WTC11 (cell line): ENCODE measurements at regions of chr14 and their contacts with region 1.

Region 1: GRCh38 chr14:20855652-20856291 is 35.4 kb upstream of the RNASE3 start:
- DNase-seq: peak; percentile 66
- ATAC-seq: peak; percentile 90
- H3K4me3 Mint-ChIP-seq: no peak overlapping the region
- H3K27ac Mint-ChIP-seq: no peak overlapping the region
- H3K4me1 Mint-ChIP-seq: peaks cover 12% of the 10 kb centered on the region
- H3K27me3 Mint-ChIP-seq: peaks cover 2% of the 10 kb centered on the region; the same call in 1 of the 2 replicates
- CTCF ChIP-seq: no peak

Region 2: DNA sequence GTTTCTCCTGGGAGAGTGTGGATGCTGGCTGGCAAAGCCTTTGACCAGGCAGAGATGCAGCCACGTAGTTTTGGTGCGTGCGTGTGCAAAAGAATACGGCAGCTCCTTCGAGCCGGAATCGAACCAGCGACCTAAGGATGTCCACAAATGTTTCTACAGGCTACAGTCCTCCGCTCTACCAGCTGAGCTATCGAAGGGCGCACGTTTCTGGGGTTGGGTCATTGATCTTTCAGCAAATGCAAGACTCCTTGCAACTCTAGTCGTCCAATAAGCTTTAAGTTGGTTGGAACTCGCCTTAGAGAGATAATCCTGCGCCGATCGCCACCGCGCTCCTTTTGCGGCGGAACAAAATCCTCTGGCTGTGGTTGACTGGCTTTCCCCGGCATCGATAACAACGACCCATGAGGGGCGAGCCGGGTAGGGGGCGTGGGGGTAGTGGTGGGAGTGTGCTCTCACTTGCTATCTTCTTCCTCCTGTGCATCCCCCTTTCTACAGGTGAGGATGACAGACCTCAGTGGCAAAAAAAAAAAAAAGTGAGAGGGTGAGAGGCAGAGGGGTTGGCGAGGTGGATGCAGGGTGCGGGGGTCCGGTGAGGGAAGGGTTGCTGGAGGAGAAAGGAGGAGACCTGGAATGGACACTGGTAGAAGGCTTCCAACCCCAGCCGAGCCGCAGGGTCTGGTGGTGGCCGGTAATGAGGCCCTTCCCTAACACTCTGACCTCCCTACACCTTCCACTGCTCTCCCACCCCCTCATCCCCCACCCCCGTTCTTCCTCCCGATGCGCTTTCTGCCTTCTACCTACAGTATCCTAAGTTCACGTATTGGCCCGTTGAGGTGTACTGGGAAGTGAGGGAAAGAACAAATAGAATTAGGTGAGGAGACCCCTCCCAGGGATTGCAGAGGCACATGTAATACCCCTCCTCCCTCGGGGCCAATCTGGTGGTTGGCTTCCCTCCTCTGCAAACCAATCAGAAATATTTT is 202.5 kb before region 1 on chr14:
- CTCF ChIA-PET with region 1: interaction called, 14 read pairs
- POLR2A ChIA-PET with region 1: no interaction called
- DNase-seq: peak; percentile 91
- ATAC-seq: peak; percentile 52
- H3K4me3 Mint-ChIP-seq: peak overlapping the region; percentile 94
- H3K27ac Mint-ChIP-seq: peak overlapping the region; percentile 50; the same call in 1 of the 2 replicates
- H3K4me1 Mint-ChIP-seq: peaks cover 33% of the 10 kb centered on the region
- H3K27me3 Mint-ChIP-seq: peaks cover 38% of the 10 kb centered on the region
- CTCF ChIP-seq: no peak

Region 3: GRCh38 chr14:20697273-20698017 is 158.3 kb before region 1 on chr14:
- CTCF ChIA-PET with region 1: interaction called, 29 read pairs
- POLR2A ChIA-PET with region 1: no interaction called
- DNase-seq: peak; percentile 72
- ATAC-seq: peak; percentile 88
- H3K4me3 Mint-ChIP-seq: no peak overlapping the region
- H3K27ac Mint-ChIP-seq: peak overlapping the region; percentile 47; the same call in 1 of the 2 replicates
- H3K4me1 Mint-ChIP-seq: peaks cover 9% of the 10 kb centered on the region
- H3K27me3 Mint-ChIP-seq: no peaks in the 10 kb centered on the region; the same call in 1 of the 2 replicates
- CTCF ChIP-seq: peak; percentile 56; the same call in 1 of the 2 replicates

Region 4: DNA sequence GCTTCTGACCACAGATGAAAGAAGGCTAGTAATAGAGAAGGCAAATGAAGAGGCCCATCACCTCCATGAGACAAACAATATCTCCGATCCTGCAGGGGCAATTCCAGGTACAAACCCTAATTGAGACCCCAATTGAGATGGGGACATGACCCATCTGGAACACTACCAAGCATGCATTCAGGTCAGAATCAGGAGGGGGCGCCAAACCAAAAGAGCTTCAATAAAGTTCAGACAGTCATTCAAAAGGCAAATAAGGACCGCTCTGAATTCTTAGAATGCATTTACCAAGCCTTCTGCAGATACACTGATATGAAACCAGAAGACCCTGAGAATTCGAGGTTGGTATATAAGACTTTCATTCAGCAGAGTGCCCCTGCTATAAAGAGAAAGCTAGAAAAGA is 97.8 kb before region 1 on chr14:
- CTCF ChIA-PET with region 1: interaction called, 21 read pairs
- POLR2A ChIA-PET with region 1: no interaction called
- DNase-seq: peak; percentile 57
- ATAC-seq: peak; percentile 76
- H3K4me3 Mint-ChIP-seq: no peak overlapping the region
- H3K27ac Mint-ChIP-seq: no peak overlapping the region
- H3K4me1 Mint-ChIP-seq: peaks cover 26% of the 10 kb centered on the region
- H3K27me3 Mint-ChIP-seq: peaks cover 4% of the 10 kb centered on the region
- CTCF ChIP-seq: 0 out of 2 replicates have a peak, but pooled peaks have one; percentile 28

Region 5: DNA sequence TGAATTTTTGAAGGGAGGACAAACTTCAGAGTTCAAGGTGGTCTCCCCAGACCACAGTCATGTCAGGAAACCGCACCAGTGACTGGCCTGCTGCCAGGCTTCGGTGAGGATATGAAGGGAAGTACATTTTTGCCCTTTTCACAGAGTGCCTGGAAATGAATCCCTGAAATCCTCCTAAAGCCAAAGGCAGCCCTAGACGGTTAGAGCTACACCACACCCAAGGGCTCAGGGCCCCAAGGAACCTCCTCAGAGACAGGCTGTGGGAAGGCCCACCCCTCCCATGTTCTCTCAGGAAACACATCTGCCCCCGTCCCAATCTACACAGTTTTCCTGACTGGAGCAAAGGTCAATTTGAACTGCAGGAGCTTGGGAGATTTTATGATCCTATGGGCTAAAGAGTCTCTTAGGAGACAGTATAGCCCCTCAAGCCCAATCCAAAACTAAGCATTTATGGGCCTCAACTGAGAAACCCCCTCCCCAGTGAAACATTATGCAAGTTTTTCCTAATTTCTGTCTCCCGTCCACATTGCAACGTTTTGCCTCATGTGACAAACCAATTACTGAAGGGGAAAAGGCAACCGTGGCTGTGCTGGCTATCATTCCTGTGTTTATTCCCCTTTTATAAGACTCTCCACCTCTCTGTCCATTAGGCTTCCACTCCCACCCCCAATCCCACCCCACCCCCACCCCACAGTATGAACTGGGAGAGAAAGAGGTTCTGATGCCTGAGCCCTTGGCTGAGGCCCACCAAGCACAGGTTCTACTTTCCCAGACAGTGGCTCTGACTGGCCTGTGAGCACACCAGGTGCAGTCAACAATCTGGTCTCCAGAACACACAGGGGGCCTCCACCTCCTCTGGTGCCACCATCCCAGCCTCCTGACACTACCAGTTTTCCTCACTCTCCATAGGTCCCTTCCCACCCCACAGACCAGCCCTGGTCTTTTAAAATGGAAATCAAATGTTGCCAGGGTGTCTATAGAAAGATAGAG is 43.5 kb before region 1 on chr14:
- CTCF ChIA-PET with region 1: interaction called, 13 read pairs
- POLR2A ChIA-PET with region 1: no interaction called
- DNase-seq: no peak
- ATAC-seq: no peak
- H3K4me3 Mint-ChIP-seq: no peak overlapping the region
- H3K27ac Mint-ChIP-seq: no peak overlapping the region
- H3K4me1 Mint-ChIP-seq: peaks cover 16% of the 10 kb centered on the region
- H3K27me3 Mint-ChIP-seq: no peaks in the 10 kb centered on the region; the same call in 1 of the 2 replicates
- CTCF ChIP-seq: no peak

Region 6: GRCh38 chr14:20866963-20867362 is 11.2 kb after region 1 on chr14:
- CTCF ChIA-PET with region 1: interaction called, 46 read pairs
- POLR2A ChIA-PET with region 1: interaction called, 5 read pairs
- DNase-seq: peak; percentile 30
- ATAC-seq: peak; percentile 73
- H3K4me3 Mint-ChIP-seq: no peak overlapping the region
- H3K27ac Mint-ChIP-seq: no peak overlapping the region
- H3K4me1 Mint-ChIP-seq: no peaks in the 10 kb centered on the region; the same call in 1 of the 2 replicates
- H3K27me3 Mint-ChIP-seq: peaks cover 21% of the 10 kb centered on the region
- CTCF ChIP-seq: no peak; the same call in 1 of the 2 replicates

Region 7: GRCh38 chr14:21039585-21040369 is 184.0 kb after region 1 on chr14:
- CTCF ChIA-PET with region 1: interaction called, 19 read pairs
- POLR2A ChIA-PET with region 1: no interaction called
- DNase-seq: peak; percentile 33
- ATAC-seq: peak; percentile 74
- H3K4me3 Mint-ChIP-seq: peak overlapping the region; percentile 25
- H3K27ac Mint-ChIP-seq: peak overlapping the region; percentile 72; the same call in 1 of the 2 replicates
- H3K4me1 Mint-ChIP-seq: peaks cover 26% of the 10 kb centered on the region
- H3K27me3 Mint-ChIP-seq: peaks cover 3% of the 10 kb centered on the region; the same call in 1 of the 2 replicates
- CTCF ChIP-seq: 0 out of 2 replicates have a peak, but pooled peaks have one; percentile 25